PC-9 (cell line): ENCODE measurements at regions of chr18 and their contacts with region 1.

Region 1: GRCh38 chr18:56756966-56757365 is 105.8 kb downstream of the WDR7 start:
- DNase-seq: no peak
- H3K4me3 ChIP-seq: no peak overlapping the region
- H3K27ac ChIP-seq: no peak overlapping the region
- H3K4me1 ChIP-seq: no peaks in the 10 kb centered on the region
- H3K27me3 ChIP-seq: no peaks in the 10 kb centered on the region
- CTCF ChIP-seq: no peak

Region 2: DNA sequence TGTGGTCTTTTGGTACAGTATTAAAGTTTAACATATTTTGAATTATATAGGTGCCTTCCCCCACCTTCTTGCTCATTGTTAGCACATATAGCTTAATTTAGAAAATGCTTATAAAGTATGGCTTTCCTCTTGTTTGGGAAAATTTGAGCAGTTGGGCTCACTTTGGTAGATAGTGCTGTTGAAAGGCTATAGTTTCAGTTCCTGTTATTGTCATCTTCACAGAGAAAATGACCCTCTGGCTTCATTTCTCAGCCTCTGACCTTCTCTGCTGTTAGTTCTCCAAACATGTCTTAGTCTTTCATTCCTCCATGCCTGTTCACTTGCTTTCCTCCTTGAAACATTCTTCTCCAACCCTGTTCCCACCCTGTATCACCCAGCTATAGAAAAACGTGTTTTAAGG is 94.8 kb after region 1 on chr18:
- CTCF ChIA-PET with region 1: no interaction called
- POLR2A ChIA-PET with region 1: no interaction called
- intact Hi-C with region 1: loop called (anchors 10 kb)
- DNase-seq: no peak
- H3K4me3 ChIP-seq: no peak overlapping the region
- H3K27ac ChIP-seq: no peak overlapping the region
- H3K4me1 ChIP-seq: no peaks in the 10 kb centered on the region
- H3K27me3 ChIP-seq: no peaks in the 10 kb centered on the region
- CTCF ChIP-seq: no peak